ENCODE measurements at regions of chr19 and their contacts with region 1.

Region 1: GRCh38 chr19:2950286-2951124 is 5.7 kb upstream of the ZNF77 start:
- DNase-seq: peak; percentile 99
- ATAC-seq: peak; percentile 97
- H3K4me3 ChIP-seq: peak overlapping the region; percentile 70
- H3K27ac ChIP-seq: peak overlapping the region; percentile 94
- H3K4me1 ChIP-seq: 0 out of 2 replicates have a peak, but pooled peaks cover 2% of the 10 kb centered on the region
- H3K27me3 ChIP-seq: no peaks in the 10 kb centered on the region
- CTCF ChIP-seq: no peak
- POLR2A ChIP-seq: peak; percentile 95
- RAD21 ChIP-seq: no peak

Region 2: DNA sequence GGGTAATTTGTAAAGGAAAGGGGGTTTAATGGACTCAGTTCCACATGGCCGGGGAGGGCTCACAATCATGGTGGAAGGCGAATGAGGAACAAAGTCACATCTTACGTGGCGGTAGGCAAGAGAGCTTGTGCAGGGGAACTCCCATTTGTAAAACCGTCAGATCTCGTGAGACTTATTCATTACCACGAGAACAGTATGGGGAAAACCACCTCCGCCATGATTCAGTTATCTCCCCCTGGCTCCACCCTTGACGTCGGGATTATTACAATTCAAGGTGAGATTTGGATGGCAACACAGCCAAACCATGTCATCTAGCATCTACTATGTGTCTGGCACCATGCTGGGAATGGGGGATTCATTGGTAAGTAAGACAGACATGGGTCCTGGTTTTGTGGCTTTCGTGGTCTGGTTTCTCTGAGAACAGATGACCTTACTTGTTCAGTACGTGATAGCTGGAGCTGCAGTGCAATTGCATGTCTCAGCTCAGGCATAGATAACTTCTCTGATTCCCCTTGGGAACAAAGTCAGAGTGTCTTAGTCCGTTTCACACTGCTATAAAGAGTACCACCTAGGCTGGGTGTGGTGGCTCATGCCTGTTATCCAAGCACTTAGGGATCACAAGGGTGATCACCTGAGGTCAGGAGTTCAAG is 122.5 kb before region 1 on chr19:
- CTCF ChIA-PET with region 1: no interaction called
- POLR2A ChIA-PET with region 1: no interaction called
- dilution Hi-C with region 1: no loop called
- in situ Hi-C with region 1: no loop called
- intact Hi-C with region 1: no loop called
- DNase-seq: no peak
- ATAC-seq: no peak
- H3K4me3 ChIP-seq: no peak overlapping the region
- H3K27ac ChIP-seq: no peak overlapping the region
- H3K4me1 ChIP-seq: no peaks in the 10 kb centered on the region
- H3K27me3 ChIP-seq: no peaks in the 10 kb centered on the region
- CTCF ChIP-seq: no peak
- POLR2A ChIP-seq: no peak
- RAD21 ChIP-seq: no peak

Region 3: DNA sequence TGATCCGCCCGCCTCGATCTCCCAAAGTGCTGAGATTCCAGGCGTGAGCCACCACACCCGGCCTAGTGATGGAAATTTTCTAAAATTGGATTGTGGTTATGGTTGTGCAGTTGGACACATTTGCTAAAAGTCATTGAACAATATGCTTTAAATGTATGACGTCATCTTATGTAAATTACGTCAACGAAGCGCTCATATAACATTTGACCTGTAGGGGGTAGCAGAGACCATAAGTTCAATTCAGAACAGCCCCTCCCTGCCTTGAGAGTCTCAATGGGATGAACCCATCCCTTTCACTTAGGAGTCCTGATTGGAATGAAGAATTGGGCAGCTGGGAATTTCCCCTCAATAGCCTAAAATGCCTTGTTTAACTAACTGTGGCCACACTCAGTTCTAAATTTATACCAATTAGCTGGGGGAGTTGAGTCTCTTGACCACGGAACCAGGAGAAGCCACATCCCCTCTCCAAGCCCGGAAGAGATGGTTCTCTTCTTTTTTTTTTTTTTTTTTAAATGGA is 11.6 kb after region 1 on chr19:
- CTCF ChIA-PET with region 1: interaction called, 6 read pairs
- POLR2A ChIA-PET with region 1: interaction called, 10 read pairs
- dilution Hi-C with region 1: no loop called
- in situ Hi-C with region 1: no loop called
- intact Hi-C with region 1: no loop called
- DNase-seq: peak; percentile 89
- ATAC-seq: peak; percentile 99
- H3K4me3 ChIP-seq: peak overlapping the region; percentile 14; the same call in 1 of the 2 replicates
- H3K27ac ChIP-seq: no peak overlapping the region
- H3K4me1 ChIP-seq: no peaks in the 10 kb centered on the region
- H3K27me3 ChIP-seq: peaks cover 3% of the 10 kb centered on the region
- CTCF ChIP-seq: peak; percentile 95
- POLR2A ChIP-seq: no peak
- RAD21 ChIP-seq: peak; percentile 85

Region 4: GRCh38 chr19:3100081-3100864 is 149.8 kb after region 1 on chr19:
- CTCF ChIA-PET with region 1: no interaction called
- POLR2A ChIA-PET with region 1: no interaction called
- dilution Hi-C with region 1: no loop called
- in situ Hi-C with region 1: loop called (anchors 5 kb)
- intact Hi-C with region 1: no loop called
- DNase-seq: no peak
- ATAC-seq: no peak
- H3K4me3 ChIP-seq: no peak overlapping the region
- H3K27ac ChIP-seq: no peak overlapping the region
- H3K4me1 ChIP-seq: peaks cover 22% of the 10 kb centered on the region
- H3K27me3 ChIP-seq: no peaks in the 10 kb centered on the region
- CTCF ChIP-seq: no peak
- POLR2A ChIP-seq: no peak
- RAD21 ChIP-seq: no peak

Region 5: DNA sequence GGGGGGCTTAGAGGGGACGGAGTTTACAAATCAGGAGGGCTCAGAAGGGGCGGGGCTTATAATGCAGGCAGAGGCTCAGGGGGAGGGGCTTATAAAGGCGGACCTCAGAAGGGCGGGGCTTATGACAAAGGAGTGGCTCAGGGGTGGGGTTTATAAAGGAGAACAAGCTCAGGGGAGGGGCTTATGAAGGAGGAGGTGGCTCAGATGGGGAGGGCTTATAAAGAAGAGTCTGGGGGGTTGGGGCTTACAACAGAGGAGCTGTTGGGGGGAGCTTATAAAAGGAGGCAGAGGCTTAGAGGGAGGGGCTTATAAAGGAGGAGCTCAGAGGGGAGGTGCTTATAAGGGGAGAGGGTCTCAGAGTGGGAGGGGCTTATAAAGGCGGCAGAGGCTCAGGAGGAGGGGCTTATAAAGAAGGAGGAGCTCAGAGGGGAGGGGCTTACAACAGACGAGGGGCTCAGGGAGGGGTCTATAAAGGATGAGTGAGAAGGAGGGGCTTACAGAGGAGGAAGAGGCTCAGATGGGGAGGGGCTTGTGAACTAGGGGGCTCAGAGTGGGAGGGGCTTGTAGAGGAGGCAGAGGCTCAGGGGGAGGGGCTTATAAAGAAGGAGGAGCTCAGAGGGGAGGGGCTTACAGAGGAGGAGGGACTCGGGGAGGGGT is 528.8 kb after region 1 on chr19:
- CTCF ChIA-PET with region 1: no interaction called
- POLR2A ChIA-PET with region 1: no interaction called
- dilution Hi-C with region 1: no loop called
- in situ Hi-C with region 1: loop called (anchors 25 kb)
- intact Hi-C with region 1: no loop called
- DNase-seq: no peak
- ATAC-seq: peak; percentile 48; the same call in 1 of the 2 replicates
- H3K4me3 ChIP-seq: no peak overlapping the region
- H3K27ac ChIP-seq: no peak overlapping the region
- H3K4me1 ChIP-seq: no peaks in the 10 kb centered on the region
- H3K27me3 ChIP-seq: peaks cover 42% of the 10 kb centered on the region
- CTCF ChIP-seq: no peak
- POLR2A ChIP-seq: no peak
- RAD21 ChIP-seq: no peak